ENCODE measurements at regions of chr6 and their contacts with region 1.

Region 1: GRCh38 chr6:133916650-133917151 is 27.8 kb downstream of the TCF21 start:
- H3K4me3 Mint-ChIP-seq: peak overlapping the region; percentile 51
- H3K27ac Mint-ChIP-seq: no peak overlapping the region
- H3K4me1 Mint-ChIP-seq: peaks cover 11% of the 10 kb centered on the region
- H3K27me3 Mint-ChIP-seq: peaks cover 34% of the 10 kb centered on the region

Region 2: GRCh38 chr6:133837801-133838349 is 78.8 kb before region 1 on chr6:
- intact Hi-C with region 1: loop called (anchors 1 kb)
- H3K4me3 Mint-ChIP-seq: peak overlapping the region; percentile 66
- H3K27ac Mint-ChIP-seq: no peak overlapping the region
- H3K4me1 Mint-ChIP-seq: peaks cover 6% of the 10 kb centered on the region
- H3K27me3 Mint-ChIP-seq: peaks cover 17% of the 10 kb centered on the region

Region 3: DNA sequence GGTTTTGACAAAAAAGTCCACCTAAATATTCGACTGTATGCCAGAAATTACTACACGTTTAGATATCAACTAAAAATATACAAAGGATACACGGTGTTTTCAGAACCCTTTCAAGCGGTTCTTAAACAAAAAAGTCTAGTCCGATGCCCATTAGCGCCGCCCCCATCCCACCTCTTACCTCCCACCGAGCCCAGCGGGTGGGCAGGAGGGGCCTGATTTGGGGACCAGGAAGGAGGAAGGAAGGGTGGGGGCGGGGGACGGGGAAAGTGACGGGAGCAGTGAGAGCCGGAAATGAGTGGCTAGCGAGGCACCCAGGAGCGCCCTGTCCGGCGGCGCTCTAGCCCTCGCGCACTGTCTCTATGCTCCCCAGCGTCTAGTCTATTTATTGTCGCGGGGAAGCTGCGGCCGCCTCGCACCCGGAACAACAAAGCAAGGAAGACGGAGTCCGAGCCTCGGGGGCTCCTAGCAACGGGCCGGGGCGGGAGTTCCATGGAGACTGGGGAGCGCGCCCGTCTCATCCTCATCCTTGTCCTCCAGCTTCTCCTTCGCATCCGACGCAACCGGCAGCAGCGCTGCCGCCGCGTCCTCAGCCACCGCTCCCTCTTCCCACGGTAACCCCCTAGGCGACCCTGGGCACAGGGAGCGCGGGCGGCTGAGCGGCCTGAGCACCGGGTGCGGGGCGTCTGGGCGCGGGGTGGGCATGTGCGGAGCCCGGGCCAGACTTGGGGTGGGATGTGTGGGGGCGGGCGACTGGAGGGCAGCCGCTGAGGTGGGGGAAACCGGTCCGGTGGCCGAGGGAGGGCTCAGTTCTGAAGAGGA is 36.3 kb after region 1 on chr6 and contains the start of gene TBPL1:
- intact Hi-C with region 1: no loop called
- H3K4me3 Mint-ChIP-seq: peak within 1 kb of the TSS; percentile 94
- H3K27ac Mint-ChIP-seq: peak within 1 kb of the TSS; percentile 86
- H3K4me1 Mint-ChIP-seq: peaks cover 42% of the 10 kb centered on the region
- H3K27me3 Mint-ChIP-seq: peaks cover 9% of the 10 kb centered on the region

Region 4: DNA sequence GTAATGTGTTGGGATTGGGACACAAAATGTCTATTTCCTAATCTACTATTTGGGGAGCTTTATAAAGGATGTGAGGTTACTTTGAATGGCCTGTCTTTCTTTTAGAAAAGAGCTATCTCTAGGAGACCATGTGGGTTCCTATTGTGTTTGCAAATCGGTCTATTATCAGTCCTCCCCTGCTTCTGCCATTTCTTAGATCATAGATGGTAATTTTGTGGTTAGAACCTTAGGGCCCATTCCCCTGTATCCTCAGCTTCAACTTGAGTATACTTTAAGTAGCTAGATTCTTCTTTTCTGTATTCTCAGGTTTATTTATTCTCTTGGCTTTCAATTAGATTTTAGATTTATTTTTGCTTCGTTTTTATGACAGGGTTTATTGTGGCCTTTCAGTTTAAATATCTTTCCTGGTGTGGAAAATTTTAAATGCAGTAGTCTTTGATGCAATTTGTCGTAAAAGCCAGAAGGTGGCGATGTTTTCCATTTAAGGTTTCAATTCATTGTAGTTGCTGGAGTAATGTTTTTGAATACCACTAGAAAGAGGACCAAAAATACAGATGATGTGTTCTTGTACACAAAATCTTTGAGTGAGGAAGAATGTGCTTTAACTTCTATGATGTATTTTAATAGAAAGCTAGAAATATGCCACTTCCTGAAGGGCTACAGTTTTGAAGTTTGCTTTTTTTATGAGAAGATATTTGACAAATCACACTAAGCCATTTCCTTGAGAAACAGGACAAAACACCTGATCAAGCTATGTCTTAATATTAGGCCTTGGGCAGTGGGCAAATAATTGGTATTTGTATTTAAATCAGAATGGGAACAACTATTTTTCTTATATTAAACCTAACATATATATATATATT is 56.6 kb after region 1 on chr6:
- intact Hi-C with region 1: no loop called
- H3K4me3 Mint-ChIP-seq: no peak overlapping the region
- H3K27ac Mint-ChIP-seq: no peak overlapping the region
- H3K4me1 Mint-ChIP-seq: peaks cover 17% of the 10 kb centered on the region
- H3K27me3 Mint-ChIP-seq: no peaks in the 10 kb centered on the region

Region 5: GRCh38 chr6:134750669-134751068 is 834.0 kb after region 1 on chr6:
- intact Hi-C with region 1: no loop called
- H3K4me3 Mint-ChIP-seq: no peak overlapping the region
- H3K27ac Mint-ChIP-seq: no peak overlapping the region
- H3K4me1 Mint-ChIP-seq: no peaks in the 10 kb centered on the region
- H3K27me3 Mint-ChIP-seq: peaks cover 12% of the 10 kb centered on the region